ENCODE measurements at regions of chr1 and their contacts with region 1.

Region 1: DNA sequence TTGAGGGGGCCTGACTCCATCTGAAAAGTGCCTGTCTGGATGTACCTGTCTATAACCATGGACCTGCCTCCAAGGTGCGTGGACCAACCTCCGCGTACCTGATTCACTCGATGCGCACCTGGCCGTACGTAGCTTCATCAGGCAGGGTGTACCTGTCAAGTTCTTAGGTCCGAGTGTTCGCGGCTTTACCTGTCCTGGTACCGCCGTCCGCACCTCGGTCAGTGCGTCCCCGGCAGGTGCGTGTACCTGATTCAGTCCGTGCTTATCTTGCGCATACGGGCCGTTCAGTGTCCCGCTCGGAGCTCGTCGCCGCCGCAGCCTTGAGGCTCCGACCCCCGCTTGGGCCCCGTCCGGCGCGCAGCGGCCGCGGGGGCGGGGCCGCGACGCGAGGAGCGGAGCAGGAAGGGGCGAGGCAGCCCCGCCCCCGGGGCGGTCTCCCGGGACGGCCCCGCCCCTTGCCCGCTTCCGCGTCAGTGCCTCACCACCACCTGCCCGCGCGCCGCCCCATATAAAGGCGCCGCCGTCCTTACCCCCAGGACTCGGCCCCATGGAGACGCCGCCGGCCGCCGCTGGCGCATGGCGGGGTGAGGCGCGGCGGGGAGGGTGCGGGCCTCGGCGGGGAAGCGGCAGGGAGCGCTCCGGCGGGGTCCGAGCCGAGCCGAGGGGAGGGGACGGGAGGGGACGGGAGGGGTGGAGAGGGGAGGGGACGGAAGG is at the start of gene ZC3H12A:
- DNase-seq: peak; percentile 78 to 96
- H3K4me3 ChIP-seq: peak within 1 kb of the TSS; percentile 81 to 95
- H3K27ac ChIP-seq: peak within 1 kb of the TSS; percentile 99
- H3K4me1 ChIP-seq: peaks cover 42 to 69% of the 10 kb centered on the region in 2 donors
- H3K27me3 ChIP-seq: no peaks in the 10 kb centered on the region
- CTCF ChIP-seq: no peak
- total RNA-seq, gene ZC3H12A: 12.8 TPM

Region 2: DNA sequence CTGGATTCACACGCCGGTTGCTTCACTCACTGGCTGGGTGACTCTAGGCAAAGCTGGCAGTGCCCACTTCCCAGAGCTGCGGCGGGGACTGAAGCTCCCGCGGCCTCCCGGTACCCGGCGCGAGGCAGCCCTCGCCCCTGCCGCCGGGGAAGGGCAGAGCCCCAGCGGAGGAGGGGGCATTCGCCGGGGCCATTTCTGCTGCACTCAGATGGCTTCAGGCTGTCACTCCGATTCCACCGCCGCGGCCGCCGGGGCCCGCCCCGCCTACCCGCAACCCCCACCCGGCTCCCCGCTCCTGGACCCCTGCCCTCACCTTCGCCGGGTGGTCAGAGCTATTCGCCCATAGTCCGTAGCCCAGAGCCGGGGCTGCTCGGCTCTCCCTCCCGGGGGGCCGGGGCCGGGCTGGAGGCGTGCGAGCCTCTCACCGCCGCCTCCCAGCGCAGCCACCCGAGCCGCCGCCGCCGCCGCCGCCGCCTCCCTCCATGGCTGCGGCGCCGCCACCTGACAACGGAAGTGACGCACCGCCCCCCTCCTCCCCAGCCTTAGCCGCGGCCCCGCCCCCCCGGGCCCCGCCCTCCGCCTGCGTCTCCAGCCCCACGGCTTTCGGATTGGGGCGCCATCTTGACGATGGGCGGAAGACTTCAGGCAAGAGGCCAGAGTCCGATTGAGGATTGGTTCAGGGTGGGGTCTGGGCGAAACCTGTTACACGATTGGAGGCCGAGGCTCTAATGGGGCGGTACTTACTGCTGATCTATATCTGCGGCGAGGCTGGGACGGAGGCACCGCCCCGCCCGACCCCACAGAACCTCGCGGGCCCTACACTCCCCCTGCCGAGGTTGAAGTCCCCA is 1088.6 kb before region 1 on chr1 and contains the start of gene STK40:
- intact Hi-C with region 1: loop called (anchors 10 kb)
- DNase-seq: peak; percentile 95 to 99
- H3K4me3 ChIP-seq: peak within 1 kb of the TSS; percentile 94 to 99
- H3K27ac ChIP-seq: peak within 1 kb of the TSS; percentile 94 to 99
- H3K4me1 ChIP-seq: peaks cover 20 to 52% of the 10 kb centered on the region in 2 donors
- H3K27me3 ChIP-seq: no peaks in the 10 kb centered on the region
- CTCF ChIP-seq: no peak
- total RNA-seq, gene STK40: 77.0 TPM

Region 3: DNA sequence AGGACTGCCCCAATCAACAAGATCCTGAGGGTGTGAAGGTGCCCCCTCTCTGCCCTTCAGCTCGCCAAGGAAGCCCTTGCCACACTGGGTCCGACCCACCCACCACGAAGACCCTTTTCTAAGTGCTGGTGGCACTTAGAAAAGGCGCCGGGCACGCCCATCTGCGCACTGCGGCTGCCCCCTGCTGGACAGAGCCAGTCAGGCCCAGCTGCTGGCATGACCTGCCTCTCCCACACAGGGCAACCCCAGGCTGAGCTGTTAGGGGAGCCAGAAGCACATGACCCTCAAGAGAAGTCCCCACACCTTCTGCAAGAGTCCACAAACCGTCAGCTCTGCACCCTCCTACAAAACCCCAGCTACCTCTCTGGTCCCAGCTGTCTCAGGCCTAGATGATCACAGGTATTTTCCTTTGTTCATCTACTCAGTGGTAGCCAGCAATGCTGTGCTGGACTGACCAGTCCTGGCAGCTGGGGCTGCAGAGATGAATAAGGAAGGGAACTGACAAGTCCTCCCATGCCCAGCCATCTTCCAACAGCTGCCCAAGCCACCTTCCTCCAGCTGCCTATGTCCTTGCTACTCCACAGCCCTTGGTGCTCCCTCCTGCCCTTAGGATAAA is 39.8 kb before region 1 on chr1:
- intact Hi-C with region 1: no loop called
- DNase-seq: no peak
- H3K4me3 ChIP-seq: no peak overlapping the region
- H3K27ac ChIP-seq: no peak overlapping the region
- H3K4me1 ChIP-seq: no peaks in the 10 kb centered on the region
- H3K27me3 ChIP-seq: no peaks in the 10 kb centered on the region
- CTCF ChIP-seq: peak; percentile 61 to 82 (median 76)

Region 4: DNA sequence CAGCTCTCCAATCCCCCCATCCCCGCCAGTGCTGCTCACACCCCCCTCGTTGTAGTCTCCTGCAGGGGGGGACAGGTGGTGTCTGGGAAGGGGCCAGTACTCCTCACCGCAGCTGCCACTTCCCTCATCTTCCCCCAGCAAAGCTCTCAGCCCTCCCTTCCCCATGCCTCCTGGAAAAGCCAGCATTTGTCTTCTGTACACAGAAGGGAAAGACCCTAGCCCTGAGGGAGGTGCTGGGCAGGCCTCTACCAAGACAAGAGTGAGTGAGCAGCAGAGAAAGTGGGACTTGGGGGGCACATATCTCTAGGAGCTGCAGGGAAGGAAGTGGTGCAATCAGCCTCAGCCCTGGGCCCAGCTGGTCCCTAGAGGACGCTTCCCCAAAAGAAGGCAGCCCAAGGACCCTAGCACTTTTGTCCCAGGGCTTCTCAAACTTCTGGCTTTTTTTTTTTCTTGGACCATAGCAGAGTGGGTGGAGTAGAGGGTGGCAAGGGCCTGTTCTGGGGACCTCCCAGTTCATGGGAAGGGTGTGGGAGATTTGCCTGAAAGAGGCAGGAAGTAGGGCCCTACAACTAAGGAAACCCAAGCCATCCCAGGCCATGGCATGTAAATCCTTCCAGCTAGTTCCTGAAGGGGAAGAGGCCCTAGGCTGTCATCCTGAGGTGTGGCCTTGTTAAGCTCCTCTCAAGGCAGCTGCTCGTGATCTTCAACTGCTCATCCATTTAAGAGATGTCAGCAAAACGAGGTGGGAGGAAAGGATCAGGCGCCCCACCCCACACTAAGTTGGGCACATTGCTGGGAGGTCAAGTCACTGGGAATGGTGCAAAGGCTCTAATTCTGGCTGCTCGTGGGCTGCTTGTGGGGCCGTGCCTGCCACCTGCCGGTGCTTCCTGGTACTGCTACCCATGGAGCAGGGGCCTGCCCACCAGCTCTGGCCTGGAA is 12.7 kb after region 1 on chr1:
- intact Hi-C with region 1: loop called (anchors 1 kb)
- DNase-seq: peak in 1 of 2 donors; percentile 92
- H3K4me3 ChIP-seq: no peak overlapping the region
- H3K27ac ChIP-seq: peak overlapping the region; percentile 89 to 95
- H3K4me1 ChIP-seq: peaks cover 26 to 33% of the 10 kb centered on the region in 2 donors
- H3K27me3 ChIP-seq: no peaks in the 10 kb centered on the region
- CTCF ChIP-seq: peak; percentile 97 to 99 (median 98)

Region 5: GRCh38 chr1:37553927-37554808 is 80.0 kb after region 1 on chr1 and contains the start of gene SNIP1:
- intact Hi-C with region 1: loop called (anchors 5 kb)
- DNase-seq: peak; percentile 68 to 96
- H3K4me3 ChIP-seq: peak within 1 kb of the TSS; percentile 90 to 94
- H3K27ac ChIP-seq: peak within 1 kb of the TSS; percentile 87 to 90
- H3K4me1 ChIP-seq: peaks cover 12 to 24% of the 10 kb centered on the region in 2 donors
- H3K27me3 ChIP-seq: no peaks in the 10 kb centered on the region
- CTCF ChIP-seq: no peak
- total RNA-seq, gene SNIP1: 14.4 TPM

Region 6: DNA sequence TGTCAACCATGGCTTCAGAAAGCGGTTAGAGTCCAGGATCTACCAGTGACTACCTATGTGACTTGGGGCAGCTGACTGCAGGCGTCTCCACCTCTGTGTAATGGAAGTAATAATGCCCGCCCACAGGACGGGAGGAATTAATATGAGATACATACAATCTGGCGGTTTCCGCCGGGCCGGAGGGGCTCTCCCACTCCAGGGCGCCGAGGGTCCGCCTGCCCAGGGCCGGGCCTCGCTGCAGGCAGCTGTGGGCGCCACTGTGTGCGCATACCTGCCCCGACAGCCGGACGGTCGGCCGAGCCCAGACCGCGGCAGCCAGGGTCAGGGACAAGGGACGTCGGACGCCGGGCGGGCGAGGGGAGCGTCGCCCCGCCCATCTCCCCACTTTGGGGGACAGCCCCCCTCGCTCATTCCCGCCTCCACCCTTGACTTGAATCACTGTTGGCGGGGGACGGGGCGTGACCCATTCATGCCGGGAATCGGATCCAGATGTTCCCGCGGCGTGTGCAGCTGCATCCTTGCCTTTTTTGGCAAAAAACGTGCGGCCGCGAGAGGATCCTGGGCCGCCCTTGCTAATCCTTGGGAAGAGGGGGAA is 521.6 kb after region 1 on chr1:
- intact Hi-C with region 1: loop called (anchors 10 kb)
- DNase-seq: peak in 1 of 2 donors; percentile 91
- H3K4me3 ChIP-seq: peak overlapping the region; percentile 64 to 78
- H3K27ac ChIP-seq: peak overlapping the region; percentile 93 to 96
- H3K4me1 ChIP-seq: peaks cover 20 to 46% of the 10 kb centered on the region in 2 donors
- H3K27me3 ChIP-seq: no peaks in the 10 kb centered on the region
- CTCF ChIP-seq: no peak

Measured in ascending aorta (tissue), 2 donors.